RWPE1 (cell line): ENCODE measurements at regions of chr2 and their contacts with region 1.

Region 1: GRCh38 chr2:46167924-46168323 is 129.3 kb upstream of the EPAS1 start:
- DNase-seq: no peak
- H3K27ac ChIP-seq: peak overlapping the region; percentile 36
- CTCF ChIP-seq: no peak

Region 2: GRCh38 chr2:45011621-45012602 is 1156.0 kb before region 1 on chr2:
- CTCF ChIA-PET with region 1: interaction called, 12 read pairs
- POLR2A ChIA-PET with region 1: no interaction called
- DNase-seq: no peak
- H3K27ac ChIP-seq: no peak overlapping the region; the same call in 1 of the 2 replicates
- CTCF ChIP-seq: no peak